HAP-1 (cell line): ENCODE measurements at regions of chr20 and their contacts with region 1.

Region 1: GRCh38 chr20:62793912-62794724 is 2.2 kb upstream of the MRGBP start:
- DNase-seq: peak; percentile 89 to 97
- H3K4me3 ChIP-seq: peak overlapping the region; percentile 35
- H3K4me1 ChIP-seq: peaks cover 19% of the 10 kb centered on the region
- H3K27me3 ChIP-seq: no peaks in the 10 kb centered on the region

Region 2: GRCh38 chr20:61958773-61959700 is 835.1 kb before region 1 on chr20:
- in situ Hi-C with region 1: no loop called
- DNase-seq: peak in 1 of 2 experiments; percentile 7
- H3K4me3 ChIP-seq: no peak overlapping the region
- H3K4me1 ChIP-seq: no peaks in the 10 kb centered on the region
- H3K27me3 ChIP-seq: no peaks in the 10 kb centered on the region

Region 3: GRCh38 chr20:62500237-62500864 is 293.8 kb before region 1 on chr20:
- in situ Hi-C with region 1: loop called (anchors 5 kb)
- DNase-seq: peak; percentile 28 to 90
- H3K4me3 ChIP-seq: no peak overlapping the region
- H3K4me1 ChIP-seq: no peaks in the 10 kb centered on the region
- H3K27me3 ChIP-seq: no peaks in the 10 kb centered on the region

Region 4: GRCh38 chr20:62668441-62669027 is 125.6 kb before region 1 on chr20:
- in situ Hi-C with region 1: loop called (anchors 5 kb)
- DNase-seq: peak; percentile 45 to 86
- H3K4me3 ChIP-seq: no peak overlapping the region
- H3K4me1 ChIP-seq: no peaks in the 10 kb centered on the region
- H3K27me3 ChIP-seq: no peaks in the 10 kb centered on the region

Region 5: DNA sequence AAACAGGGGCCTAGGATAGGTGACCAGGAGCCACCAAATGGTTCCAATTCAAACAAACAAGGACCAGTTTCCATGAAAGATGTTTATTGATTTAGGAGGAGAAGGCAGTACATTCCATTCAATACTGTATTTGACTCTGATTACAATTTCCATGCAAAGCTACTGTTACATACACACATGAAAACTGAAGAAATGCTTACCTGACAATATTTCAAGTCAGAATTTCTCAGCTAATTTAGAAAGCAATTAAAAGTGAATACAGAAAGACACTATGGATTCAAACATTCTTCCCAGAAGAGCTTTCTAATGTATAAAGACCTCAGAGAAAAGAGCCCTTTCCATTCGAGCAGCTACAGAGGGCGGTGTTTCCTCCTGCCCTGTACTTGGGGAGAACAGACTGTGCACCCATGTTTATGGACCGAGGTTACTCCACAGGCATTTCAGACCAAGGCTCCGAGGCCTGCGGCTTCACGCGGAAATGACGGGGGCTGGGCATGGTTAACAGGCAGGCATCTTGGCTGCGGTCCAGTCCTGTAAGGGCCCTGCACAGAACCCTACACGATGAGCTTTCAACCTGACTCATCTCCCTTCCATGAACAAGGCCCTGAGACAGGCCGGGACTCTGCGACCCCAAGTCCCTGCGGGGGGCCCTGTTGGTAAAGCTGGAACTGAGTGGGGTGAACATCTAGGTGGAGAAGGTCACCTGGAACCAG is 93.2 kb after region 1 on chr20:
- in situ Hi-C with region 1: no loop called
- DNase-seq: no peak
- H3K4me3 ChIP-seq: no peak overlapping the region
- H3K4me1 ChIP-seq: no peaks in the 10 kb centered on the region
- H3K27me3 ChIP-seq: no peaks in the 10 kb centered on the region

Region 6: GRCh38 chr20:62900052-62900691 is 106.1 kb after region 1 on chr20:
- in situ Hi-C with region 1: no loop called
- DNase-seq: peak; percentile 61 to 83
- H3K4me3 ChIP-seq: no peak overlapping the region
- H3K4me1 ChIP-seq: no peaks in the 10 kb centered on the region
- H3K27me3 ChIP-seq: no peaks in the 10 kb centered on the region

Region 7: GRCh38 chr20:62937366-62938104 is 143.4 kb after region 1 on chr20:
- in situ Hi-C with region 1: no loop called
- DNase-seq: peak; percentile 90 to 97
- H3K4me3 ChIP-seq: peak overlapping the region; percentile 97
- H3K4me1 ChIP-seq: peaks cover 11% of the 10 kb centered on the region
- H3K27me3 ChIP-seq: no peaks in the 10 kb centered on the region